Activated CD4-positive, alpha-beta T cell treated with anti-CD3 and anti-CD28 coated beads, Interleukin-2, amount 10 ng/mL, durations not matched to agents 24 days and 14 days (primary cell): ENCODE measurements at regions of chr13 and their contacts with region 1.

Region 1: DNA sequence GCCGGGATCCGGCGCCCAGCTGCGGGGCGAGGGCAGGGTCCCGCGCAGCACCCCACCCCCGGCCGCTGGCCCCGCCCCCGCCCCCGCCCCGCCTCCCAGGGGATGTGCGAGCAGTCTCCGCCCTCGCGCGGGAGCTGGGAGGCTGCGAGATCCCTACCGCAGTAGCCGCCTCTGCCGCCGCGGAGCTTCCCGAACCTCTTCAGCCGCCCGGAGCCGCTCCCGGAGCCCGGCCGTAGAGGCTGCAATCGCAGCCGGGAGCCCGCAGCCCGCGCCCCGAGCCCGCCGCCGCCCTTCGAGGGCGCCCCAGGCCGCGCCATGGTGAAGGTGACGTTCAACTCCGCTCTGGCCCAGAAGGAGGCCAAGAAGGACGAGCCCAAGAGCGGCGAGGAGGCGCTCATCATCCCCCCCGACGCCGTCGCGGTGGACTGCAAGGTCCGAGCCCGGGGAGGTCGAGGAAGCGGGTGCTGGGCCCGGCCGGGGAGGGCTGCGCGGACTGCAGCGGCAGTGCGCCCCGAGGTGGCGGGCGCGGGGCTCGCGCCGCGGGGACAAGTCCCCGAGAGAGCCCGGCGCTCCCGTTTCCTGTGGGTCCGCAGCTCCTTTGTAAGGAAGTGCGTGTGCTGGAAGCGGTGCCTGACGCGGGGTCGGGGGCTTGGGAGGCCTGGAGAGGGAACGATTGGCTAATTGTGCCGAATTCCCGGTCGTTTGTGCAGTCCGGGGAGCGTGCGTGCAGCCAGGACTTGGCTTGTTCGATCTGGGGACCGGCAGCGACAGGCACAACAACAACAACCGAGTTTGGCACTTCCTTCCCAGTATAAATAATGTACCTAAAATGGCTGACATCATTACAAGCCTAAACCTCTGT is at the start of gene ITM2B:
- DNase-seq: peak; percentile 89
- H3K4me3 Mint-ChIP-seq: peak within 1 kb of the TSS; percentile 91
- H3K27ac Mint-ChIP-seq: peak within 1 kb of the TSS; percentile 88
- H3K4me1 Mint-ChIP-seq: peaks cover 35% of the 10 kb centered on the region
- H3K27me3 Mint-ChIP-seq: peaks cover 24% of the 10 kb centered on the region
- total RNA-seq, gene ITM2B: 51.7 and 53.1 TPM in 2 replicates

Region 2: DNA sequence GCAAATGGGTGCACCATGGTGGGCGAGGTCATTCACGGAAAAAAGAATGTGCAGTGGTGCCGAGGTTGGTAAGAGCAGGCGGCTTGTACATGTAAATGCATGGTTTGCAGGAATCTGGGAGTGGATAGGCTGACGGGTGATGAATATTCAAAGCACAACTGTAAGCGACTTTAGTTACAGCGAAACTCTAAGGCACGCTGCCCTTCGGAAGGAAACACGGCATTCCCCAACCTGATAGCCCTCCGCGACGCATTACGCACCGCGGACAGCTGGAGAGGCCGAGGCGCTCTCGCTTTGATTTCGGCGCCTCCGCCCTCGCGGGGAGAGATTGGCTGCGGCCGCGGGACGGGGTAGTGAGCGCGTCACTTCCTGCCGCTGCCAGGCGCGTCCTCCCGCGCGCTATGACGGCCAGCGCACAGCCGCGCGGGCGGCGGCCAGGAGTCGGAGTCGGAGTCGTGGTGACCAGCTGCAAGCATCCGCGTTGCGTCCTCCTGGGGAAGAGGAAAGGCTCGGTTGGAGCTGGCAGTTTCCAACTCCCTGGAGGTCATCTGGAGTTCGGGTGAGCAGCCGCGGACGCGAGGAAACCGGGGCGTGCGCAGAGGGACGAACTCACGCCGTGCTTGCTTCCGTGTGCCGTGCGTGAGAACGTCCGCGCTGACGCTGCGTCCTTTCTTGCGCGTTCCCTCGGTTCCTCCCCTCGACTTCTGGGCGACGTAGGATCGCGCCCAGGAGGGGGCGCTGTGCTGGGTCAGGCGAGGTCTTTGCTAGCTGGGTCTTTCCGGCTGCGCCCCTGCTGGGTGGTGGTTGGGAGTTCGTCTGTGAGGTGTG is 195.7 kb before region 1 on chr13 and contains the start of gene NUDT15:
- intact Hi-C with region 1: loop called (anchors 5 kb)
- DNase-seq: peak; percentile 99
- H3K4me3 Mint-ChIP-seq: peak within 1 kb of the TSS; percentile 98
- H3K27ac Mint-ChIP-seq: peak within 1 kb of the TSS; percentile 99
- H3K4me1 Mint-ChIP-seq: peaks cover 30% of the 10 kb centered on the region
- H3K27me3 Mint-ChIP-seq: no peaks in the 10 kb centered on the region
- total RNA-seq, gene NUDT15: 18.2 and 19.1 TPM in 2 replicates

Region 3: DNA sequence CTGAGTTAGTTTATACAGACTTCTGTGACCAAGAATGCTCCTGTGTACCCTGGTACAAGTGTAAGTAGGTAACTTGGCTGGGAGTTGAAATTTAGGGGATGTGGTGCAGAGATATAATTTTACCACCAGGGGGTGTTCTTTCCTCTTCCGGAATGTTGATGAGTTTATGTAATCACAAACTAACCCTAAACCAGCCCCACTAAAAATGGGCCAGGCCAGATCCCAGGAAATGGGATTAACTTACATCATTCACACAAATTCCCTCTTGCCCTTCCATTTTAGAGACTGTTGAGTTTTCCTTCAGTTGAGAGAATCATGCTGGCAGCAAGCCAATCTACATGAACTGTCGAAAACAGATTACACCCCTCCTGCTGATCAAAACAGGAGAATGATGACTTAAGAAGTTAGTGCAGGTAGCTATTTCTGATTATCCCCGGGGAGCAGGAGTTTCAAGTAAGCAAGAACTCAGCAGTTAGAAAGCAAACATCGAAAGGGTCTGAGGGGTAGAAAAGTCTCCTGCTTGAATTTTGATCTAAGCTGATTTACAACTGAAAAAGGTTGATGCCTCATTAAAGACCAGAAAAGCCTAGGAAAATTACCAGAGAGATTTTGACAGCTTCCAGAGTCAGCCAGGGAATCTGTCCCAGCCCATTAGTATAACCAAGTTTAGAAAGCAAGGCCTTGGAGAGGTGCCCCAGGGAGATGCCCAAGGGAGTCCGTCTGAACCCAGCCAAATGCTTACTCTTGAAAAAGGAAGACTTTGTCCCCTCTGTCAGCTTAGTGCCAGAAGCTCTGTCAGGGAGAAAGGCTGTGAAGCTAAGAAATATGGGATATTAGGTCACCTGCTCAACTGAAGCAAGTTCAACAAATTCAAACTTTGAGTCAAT is 106.1 kb before region 1 on chr13:
- intact Hi-C with region 1: loop called (anchors 1 kb)
- DNase-seq: peak; percentile 81
- H3K4me3 Mint-ChIP-seq: no peak overlapping the region
- H3K27ac Mint-ChIP-seq: no peak overlapping the region
- H3K4me1 Mint-ChIP-seq: peaks cover 18% of the 10 kb centered on the region
- H3K27me3 Mint-ChIP-seq: peaks cover 13% of the 10 kb centered on the region

Region 4: DNA sequence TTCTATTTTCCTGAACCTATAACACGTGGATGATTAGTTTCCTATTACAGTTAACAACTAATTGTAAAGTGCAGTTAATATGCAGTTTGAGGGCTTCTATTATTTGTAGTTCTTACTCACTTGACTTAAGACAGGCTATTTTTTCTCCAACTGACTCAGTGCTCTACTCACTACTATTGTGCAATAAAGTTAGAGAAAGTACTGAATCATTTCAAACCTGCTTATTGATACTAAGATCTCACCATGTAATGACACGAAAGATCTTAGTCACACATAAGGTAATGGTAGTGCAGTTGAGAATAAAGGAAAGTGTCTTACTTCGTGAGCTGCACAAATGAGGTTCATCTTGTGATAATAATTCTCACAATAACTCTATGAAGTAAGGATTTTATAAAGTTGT is 23.1 kb before region 1 on chr13:
- intact Hi-C with region 1: loop called (anchors 1 kb)
- DNase-seq: no peak
- H3K4me3 Mint-ChIP-seq: no peak overlapping the region
- H3K27ac Mint-ChIP-seq: no peak overlapping the region
- H3K4me1 Mint-ChIP-seq: peaks cover 7% of the 10 kb centered on the region
- H3K27me3 Mint-ChIP-seq: peaks cover 34% of the 10 kb centered on the region

Region 5: DNA sequence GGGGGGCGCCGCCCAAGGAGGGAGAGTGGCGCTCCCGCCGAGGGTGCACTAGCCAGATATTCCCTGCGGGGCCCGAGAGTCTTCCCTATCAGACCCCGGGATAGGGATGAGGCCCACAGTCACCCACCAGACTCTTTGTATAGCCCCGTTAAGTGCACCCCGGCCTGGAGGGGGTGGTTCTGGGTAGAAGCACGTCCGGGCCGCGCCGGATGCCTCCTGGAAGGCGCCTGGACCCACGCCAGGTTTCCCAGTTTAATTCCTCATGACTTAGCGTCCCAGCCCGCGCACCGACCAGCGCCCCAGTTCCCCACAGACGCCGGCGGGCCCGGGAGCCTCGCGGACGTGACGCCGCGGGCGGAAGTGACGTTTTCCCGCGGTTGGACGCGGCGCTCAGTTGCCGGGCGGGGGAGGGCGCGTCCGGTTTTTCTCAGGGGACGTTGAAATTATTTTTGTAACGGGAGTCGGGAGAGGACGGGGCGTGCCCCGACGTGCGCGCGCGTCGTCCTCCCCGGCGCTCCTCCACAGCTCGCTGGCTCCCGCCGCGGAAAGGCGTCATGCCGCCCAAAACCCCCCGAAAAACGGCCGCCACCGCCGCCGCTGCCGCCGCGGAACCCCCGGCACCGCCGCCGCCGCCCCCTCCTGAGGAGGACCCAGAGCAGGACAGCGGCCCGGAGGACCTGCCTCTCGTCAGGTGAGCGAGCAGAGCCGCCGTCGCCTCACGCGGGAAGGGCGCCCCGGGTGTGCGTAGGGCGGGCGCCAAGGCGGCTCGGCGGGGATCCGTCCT is 70.3 kb after region 1 on chr13 and contains the start of gene RB1:
- intact Hi-C with region 1: loop called (anchors 1 kb)
- DNase-seq: peak; percentile 97
- H3K4me3 Mint-ChIP-seq: peak within 1 kb of the TSS; percentile 87
- H3K27ac Mint-ChIP-seq: peak within 1 kb of the TSS; percentile 98
- H3K4me1 Mint-ChIP-seq: peaks cover 21% of the 10 kb centered on the region
- H3K27me3 Mint-ChIP-seq: no peaks in the 10 kb centered on the region
- total RNA-seq, gene RB1: 27.3 and 29.0 TPM in 2 replicates

Region 6: GRCh38 chr13:48580185-48580803 is 347.0 kb after region 1 on chr13:
- intact Hi-C with region 1: loop called (anchors 5 kb)
- DNase-seq: peak; percentile 91
- H3K4me3 Mint-ChIP-seq: no peak overlapping the region
- H3K27ac Mint-ChIP-seq: no peak overlapping the region
- H3K4me1 Mint-ChIP-seq: peaks cover 12% of the 10 kb centered on the region
- H3K27me3 Mint-ChIP-seq: peaks cover 70% of the 10 kb centered on the region